GM12878 (cell line): ENCODE measurements at regions of chr9 and their contacts with region 1.

Region 1: DNA sequence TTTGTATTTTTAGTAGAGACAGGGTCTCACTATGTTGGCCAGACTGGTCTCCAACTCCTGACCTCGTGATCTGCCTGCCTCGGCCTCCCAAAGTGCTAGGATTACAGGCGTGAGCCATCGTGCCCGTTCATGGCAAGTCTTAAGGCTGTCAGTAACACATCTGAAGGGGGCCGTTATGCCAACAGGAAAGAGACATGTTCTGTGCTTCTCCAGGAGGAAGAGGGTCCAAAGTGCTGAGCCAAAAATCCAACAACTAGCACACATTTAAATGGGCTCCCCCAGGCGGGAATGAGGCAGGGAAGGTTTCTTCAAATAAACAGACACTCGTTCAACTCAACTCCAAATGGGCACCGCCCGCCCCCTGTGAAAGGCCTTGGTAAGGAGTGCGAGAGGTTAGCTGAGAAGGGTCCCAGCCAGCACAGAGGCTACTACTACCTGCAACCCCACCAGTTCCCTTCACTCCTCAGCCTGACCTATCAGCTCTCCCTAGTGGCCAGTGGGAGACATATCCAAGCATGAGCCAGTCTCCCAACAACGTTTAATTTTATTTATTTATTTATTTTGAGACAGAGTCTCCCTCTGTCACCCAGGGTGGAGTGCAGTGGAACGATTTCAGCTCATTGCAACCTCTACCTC is 84.1 kb upstream of the DMRT1 start:
- DNase-seq: no peak
- ATAC-seq: peak; percentile 82
- H3K4me3 ChIP-seq: no peak overlapping the region
- H3K27ac ChIP-seq: no peak overlapping the region
- H3K4me1 ChIP-seq: peaks cover 5% of the 10 kb centered on the region; the same call in 1 of the 2 replicates
- H3K27me3 ChIP-seq: no peaks in the 10 kb centered on the region; a peak in 2 of 4 replicates
- CTCF ChIP-seq: peak in 2 of 3 experiments; percentile 26 to 29; a peak in 2 of 6 replicates
- EP300 ChIP-seq: no peak
- POLR2A ChIP-seq: no peak
- RAD21 ChIP-seq: peak; percentile 30; the same call in 1 of the 2 replicates

Region 2: GRCh38 chr9:626596-626995 is 130.8 kb before region 1 on chr9:
- CTCF ChIA-PET with region 1: no interaction called
- POLR2A ChIA-PET with region 1: no interaction called
- RAD21 ChIA-PET with region 1: no interaction called
- SMC1A ChIA-PET with region 1: no interaction called
- in situ Hi-C with region 1: no loop called
- intact Hi-C with region 1: loop called (anchors 5 kb)
- DNase-seq: no peak
- ATAC-seq: peak; percentile 85
- H3K4me3 ChIP-seq: no peak overlapping the region
- H3K27ac ChIP-seq: no peak overlapping the region
- H3K4me1 ChIP-seq: no peaks in the 10 kb centered on the region
- H3K27me3 ChIP-seq: peaks cover 0 to 1% of the 10 kb centered on the region in 2 experiments; a peak in 1 of 4 replicates
- CTCF ChIP-seq: no peak
- EP300 ChIP-seq: no peak
- POLR2A ChIP-seq: no peak
- RAD21 ChIP-seq: no peak